Activated CD8-positive, alpha-beta T cell treated with anti-CD3 and anti-CD28 coated beads, Interleukin-2, amount 10 ng/mL, durations not matched to agents 7 days and 5 days (primary cell): ENCODE measurements at regions of chr6 and their contacts with region 1.

Region 1: GRCh38 chr6:75208298-75209183 is 2.7 kb upstream of the COL12A1 start:
- DNase-seq: peak; percentile 85
- ATAC-seq: peak; percentile 85
- H3K4me3 Mint-ChIP-seq: peak overlapping the region; percentile 4
- H3K27ac Mint-ChIP-seq: no peak overlapping the region
- H3K4me1 Mint-ChIP-seq: peaks cover 49% of the 10 kb centered on the region
- H3K27me3 Mint-ChIP-seq: peaks cover 65% of the 10 kb centered on the region

Region 2: DNA sequence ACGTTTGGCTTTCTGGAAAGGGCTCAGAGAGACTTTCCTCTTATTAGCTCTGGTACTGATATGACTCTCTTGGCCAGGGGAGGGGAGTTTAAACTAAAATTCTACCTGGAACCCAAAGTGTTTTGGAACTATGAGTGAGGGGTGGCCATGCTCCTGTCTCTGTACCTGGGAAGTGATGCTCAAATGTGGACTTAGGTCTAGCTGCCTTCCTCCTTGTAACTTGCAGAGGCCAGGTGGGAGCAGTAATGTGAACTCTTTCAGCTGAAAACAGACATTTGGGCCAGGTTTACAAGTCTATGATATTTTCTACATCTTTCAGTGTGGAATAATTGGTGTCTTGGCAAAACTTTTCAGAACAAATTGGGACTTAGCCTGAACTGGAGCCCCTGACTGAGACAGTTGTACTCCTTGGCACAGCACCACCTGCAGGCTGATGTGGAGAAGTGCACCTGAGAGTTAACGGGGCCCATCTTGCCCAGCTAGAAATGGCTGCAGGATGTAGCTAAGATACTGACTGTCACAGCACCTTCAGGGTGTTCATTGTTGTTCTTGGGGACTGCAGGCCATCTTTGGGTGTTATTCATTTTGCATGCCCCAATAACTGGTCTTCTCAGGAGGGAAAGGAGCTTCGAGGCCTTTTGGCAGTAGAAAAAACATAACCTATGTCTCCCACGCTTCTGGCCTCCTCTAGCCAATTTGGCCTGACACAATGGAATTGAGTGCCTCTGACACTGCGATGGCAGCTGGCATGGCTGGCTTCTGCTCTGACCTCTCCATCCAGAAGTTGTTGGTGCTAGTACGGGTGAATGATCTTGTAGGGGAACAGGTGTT is 1475.5 kb before region 1 on chr6:
- CTCF ChIA-PET with region 1: interaction called, 75 read pairs
- POLR2A ChIA-PET with region 1: no interaction called
- DNase-seq: peak; percentile 84
- ATAC-seq: peak; percentile 89
- H3K4me3 Mint-ChIP-seq: no peak overlapping the region
- H3K27ac Mint-ChIP-seq: no peak overlapping the region
- H3K4me1 Mint-ChIP-seq: peaks cover 8% of the 10 kb centered on the region
- H3K27me3 Mint-ChIP-seq: no peaks in the 10 kb centered on the region

Region 3: DNA sequence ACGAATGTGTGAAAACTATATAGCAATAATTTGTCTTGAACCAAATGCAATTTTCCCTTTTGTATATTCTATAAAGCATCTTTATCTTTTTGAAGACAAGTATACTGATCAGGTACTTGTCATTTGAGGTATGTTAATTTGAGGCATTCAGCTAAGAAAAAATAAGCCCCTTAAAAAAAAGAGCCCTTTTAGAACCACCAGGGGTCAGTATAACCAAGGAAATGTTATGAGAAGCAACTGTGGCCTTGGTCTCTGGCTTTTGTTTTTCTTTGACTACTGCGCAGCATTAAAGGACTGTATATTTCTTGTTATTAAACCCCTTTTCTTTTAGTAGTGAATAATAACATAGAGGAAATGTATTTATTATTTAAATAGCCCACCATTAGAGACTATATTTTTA is 1469.4 kb before region 1 on chr6:
- CTCF ChIA-PET with region 1: interaction called, 75 read pairs
- POLR2A ChIA-PET with region 1: no interaction called
- DNase-seq: no peak
- ATAC-seq: peak; percentile 73
- H3K4me3 Mint-ChIP-seq: no peak overlapping the region
- H3K27ac Mint-ChIP-seq: no peak overlapping the region
- H3K4me1 Mint-ChIP-seq: peaks cover 2% of the 10 kb centered on the region
- H3K27me3 Mint-ChIP-seq: no peaks in the 10 kb centered on the region

Region 4: DNA sequence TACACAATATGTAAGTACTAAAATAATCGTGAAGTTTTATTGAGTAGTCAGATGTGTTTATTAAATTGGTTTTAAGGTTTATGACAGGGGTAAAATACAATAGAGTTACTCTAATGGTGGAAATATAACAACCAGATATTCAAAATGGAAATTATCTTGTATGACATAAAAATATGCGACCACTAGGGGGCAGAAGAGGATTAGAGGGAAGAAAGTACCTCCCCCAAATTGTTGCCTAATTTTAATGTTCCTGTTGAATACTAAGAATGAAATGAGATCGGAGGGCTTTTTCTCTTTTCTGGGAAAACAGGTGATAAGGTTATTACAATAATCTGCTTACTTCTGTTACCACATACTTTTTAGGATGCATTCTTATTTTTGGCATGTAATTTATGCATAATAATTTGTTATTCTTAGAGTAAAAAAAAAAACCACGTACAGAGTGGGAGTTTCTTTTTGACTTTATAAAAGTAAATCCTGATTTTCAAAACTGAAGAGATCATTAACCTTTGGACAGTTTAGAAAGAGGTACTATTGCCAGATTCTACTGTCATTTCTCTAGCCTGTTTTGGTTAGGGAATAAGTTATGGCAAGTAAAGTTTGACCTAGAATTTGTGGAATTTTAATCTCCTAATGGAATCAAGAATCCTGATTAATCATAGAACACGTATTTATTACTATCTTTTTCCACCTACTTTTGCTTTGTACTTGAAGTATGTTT is 1353.4 kb before region 1 on chr6:
- CTCF ChIA-PET with region 1: interaction called, 27 read pairs
- POLR2A ChIA-PET with region 1: no interaction called
- DNase-seq: peak; percentile 45
- ATAC-seq: no peak
- H3K4me3 Mint-ChIP-seq: no peak overlapping the region
- H3K27ac Mint-ChIP-seq: no peak overlapping the region
- H3K4me1 Mint-ChIP-seq: no peaks in the 10 kb centered on the region
- H3K27me3 Mint-ChIP-seq: no peaks in the 10 kb centered on the region

Region 5: DNA sequence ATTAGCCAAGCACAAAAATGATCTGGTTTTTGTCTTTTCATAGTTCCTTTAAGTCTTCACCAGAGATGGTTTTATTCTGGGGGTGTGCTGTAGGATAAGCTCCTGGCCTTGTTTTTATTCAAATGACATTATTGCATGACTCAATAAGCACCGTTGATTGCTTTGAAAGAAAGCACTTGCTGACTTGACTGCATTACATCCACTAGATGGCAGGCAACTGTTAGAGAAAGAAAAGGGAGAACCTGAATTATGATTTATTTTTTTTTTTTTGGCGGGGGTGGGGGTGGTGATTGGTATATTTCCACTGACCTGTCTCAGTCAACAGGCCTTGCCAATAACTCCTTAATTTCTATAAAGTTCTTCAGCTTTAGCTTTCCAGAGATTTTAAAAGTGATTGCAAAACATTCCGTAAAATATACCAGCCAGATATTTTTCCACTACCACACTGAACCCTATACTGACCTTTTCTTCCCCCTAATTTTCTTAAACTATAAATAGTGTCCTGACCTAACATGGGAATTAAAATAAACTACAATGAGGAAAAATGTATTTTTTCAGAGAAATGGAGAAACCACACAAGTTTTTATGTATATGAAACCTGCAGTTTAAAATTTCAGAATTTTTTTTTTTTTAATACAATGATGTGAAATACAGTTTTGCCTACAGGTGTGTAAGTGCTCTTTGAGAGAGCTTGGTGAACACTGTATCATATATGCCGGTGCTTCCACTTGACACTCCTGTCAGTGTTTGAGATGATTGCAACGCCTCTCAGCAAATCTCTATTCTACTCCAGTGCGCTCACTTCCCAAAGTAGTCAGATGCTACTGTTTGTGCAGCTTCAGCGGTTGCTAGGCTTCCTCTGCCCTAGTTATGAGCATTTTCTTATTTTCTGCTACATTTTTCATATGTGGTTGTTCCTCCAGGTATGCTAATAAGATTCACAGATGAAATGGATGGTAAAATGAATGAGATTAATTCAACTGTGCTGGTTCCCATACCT is 1238.3 kb before region 1 on chr6:
- CTCF ChIA-PET with region 1: interaction called, 11 read pairs
- POLR2A ChIA-PET with region 1: no interaction called
- DNase-seq: no peak
- ATAC-seq: no peak
- H3K4me3 Mint-ChIP-seq: no peak overlapping the region
- H3K27ac Mint-ChIP-seq: no peak overlapping the region
- H3K4me1 Mint-ChIP-seq: no peaks in the 10 kb centered on the region
- H3K27me3 Mint-ChIP-seq: no peaks in the 10 kb centered on the region

Region 6: GRCh38 chr6:74091136-74091793 is 1117.3 kb before region 1 on chr6:
- CTCF ChIA-PET with region 1: interaction called, 31 read pairs
- POLR2A ChIA-PET with region 1: no interaction called
- DNase-seq: no peak
- ATAC-seq: no peak
- H3K4me3 Mint-ChIP-seq: no peak overlapping the region
- H3K27ac Mint-ChIP-seq: no peak overlapping the region
- H3K4me1 Mint-ChIP-seq: no peaks in the 10 kb centered on the region
- H3K27me3 Mint-ChIP-seq: no peaks in the 10 kb centered on the region

Region 7: GRCh38 chr6:75084872-75085381 is 123.6 kb before region 1 on chr6:
- CTCF ChIA-PET with region 1: no interaction called
- POLR2A ChIA-PET with region 1: no interaction called
- DNase-seq: no peak
- ATAC-seq: no peak
- H3K4me3 Mint-ChIP-seq: no peak overlapping the region
- H3K27ac Mint-ChIP-seq: no peak overlapping the region
- H3K4me1 Mint-ChIP-seq: no peaks in the 10 kb centered on the region
- H3K27me3 Mint-ChIP-seq: peaks cover 17% of the 10 kb centered on the region

Region 8: GRCh38 chr6:75230484-75231325 is 22.2 kb after region 1 on chr6:
- CTCF ChIA-PET with region 1: interaction called, 22 read pairs
- POLR2A ChIA-PET with region 1: no interaction called
- DNase-seq: no peak
- ATAC-seq: no peak
- H3K4me3 Mint-ChIP-seq: no peak overlapping the region
- H3K27ac Mint-ChIP-seq: no peak overlapping the region
- H3K4me1 Mint-ChIP-seq: no peaks in the 10 kb centered on the region
- H3K27me3 Mint-ChIP-seq: peaks cover 3% of the 10 kb centered on the region